ENCODE measurements at regions of chr11 and their contacts with region 1.

Region 1: GRCh38 chr11:111514216-111515031 is at the start of gene HOATZ:
- DNase-seq: peak; percentile 46
- ATAC-seq: peak; percentile 23
- H3K4me3 Mint-ChIP-seq: peak within 1 kb of the TSS; percentile 2
- H3K27ac Mint-ChIP-seq: no peak within 1 kb of the TSS
- H3K4me1 Mint-ChIP-seq: peaks cover 20% of the 10 kb centered on the region
- H3K27me3 Mint-ChIP-seq: peaks cover 34% of the 10 kb centered on the region
- total RNA-seq, gene HOATZ: not detected

Region 2: DNA sequence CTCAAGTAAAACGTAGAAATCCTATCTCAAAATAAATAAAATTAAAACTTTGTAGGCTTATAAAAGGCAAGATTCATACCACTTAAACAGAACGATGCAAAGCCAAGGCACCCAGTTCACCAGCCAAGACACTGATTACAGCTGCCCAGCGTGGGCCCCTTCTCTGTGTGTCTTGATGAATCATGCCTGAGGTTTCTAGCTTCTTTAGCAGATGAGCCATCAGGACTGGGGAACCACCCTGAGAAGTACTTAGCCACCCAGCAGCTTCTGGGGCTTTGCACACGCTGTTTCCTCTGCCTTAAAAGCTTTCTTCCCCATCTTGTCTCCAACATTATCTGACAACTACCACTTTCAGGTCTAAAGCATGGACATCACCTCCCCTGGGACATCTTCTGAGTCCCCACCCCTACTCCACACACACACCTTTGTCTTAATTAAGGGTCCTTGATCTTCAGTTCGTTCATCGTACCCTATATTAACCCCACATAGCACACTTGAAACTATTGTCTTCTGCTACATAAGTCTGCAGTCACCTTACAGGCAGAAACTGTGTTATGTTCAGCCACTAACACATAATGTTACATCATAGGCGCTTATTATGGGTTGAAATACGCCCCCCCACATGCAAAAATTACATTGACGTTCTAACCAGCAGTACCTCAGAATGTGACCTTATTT is 17.4 kb after region 1 on chr11:
- CTCF ChIA-PET with region 1: interaction called, 5 read pairs
- POLR2A ChIA-PET with region 1: interaction called, 4 read pairs
- intact Hi-C with region 1: loop called in 1 of 2 experiments (anchors 2 kb)
- DNase-seq: peak; percentile 88
- ATAC-seq: peak; percentile 96
- H3K4me3 Mint-ChIP-seq: no peak overlapping the region
- H3K27ac Mint-ChIP-seq: peak overlapping the region; percentile 59
- H3K4me1 Mint-ChIP-seq: peaks cover 43% of the 10 kb centered on the region
- H3K27me3 Mint-ChIP-seq: peaks cover 9% of the 10 kb centered on the region